Gastrocnemius medialis (tissue), 4 donors: ENCODE measurements at regions of chr3 and their contacts with region 1.

Region 1: GRCh38 chr3:46976326-46977190 is at the start of gene CCDC12:
- DNase-seq: peak; percentile 98 to 99
- ATAC-seq: peak; percentile 89 to 92
- H3K4me3 ChIP-seq: peak within 1 kb of the TSS; percentile 75 to 94 (median 88)
- H3K27ac ChIP-seq: peak within 1 kb of the TSS; percentile 93 to 98 (median 95)
- H3K4me1 ChIP-seq: peaks cover 44 to 50% of the 10 kb centered on the region in 2 donors
- H3K27me3 ChIP-seq: no peaks in the 10 kb centered on the region
- CTCF ChIP-seq: no peak
- POLR2A ChIP-seq: peak; percentile 89 to 95
- total RNA-seq, gene CCDC12: 24.6 to 32.0 (median 29.0) TPM

Region 2: DNA sequence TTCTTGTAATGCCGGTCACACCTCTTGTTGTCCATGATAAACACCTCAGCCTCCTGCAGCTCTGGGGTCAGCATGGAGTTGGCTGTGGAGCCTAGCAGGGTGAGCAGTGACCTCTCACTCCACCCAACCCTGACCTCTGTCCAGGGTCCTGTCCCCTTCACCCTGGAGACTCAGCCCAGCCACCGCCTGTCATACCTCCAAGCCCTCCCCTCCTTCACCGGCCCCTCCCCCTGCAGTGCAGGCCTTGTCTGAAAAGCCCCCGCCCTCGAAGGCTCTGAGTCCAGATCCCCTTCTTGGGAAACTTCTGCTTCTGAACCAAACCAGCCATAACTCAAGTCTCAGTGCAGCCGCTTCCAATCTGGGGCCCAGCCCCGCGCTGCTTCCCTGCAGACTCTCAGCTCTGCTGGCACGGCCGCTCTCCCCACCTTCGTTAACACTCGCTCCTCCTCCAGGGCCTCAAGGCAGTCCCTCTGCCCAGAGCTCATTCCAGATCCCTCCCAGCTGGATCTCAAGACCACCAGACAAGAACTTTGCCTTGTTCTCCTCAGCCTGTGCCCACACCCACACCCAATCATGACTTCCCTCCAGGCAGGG is 233.5 kb before region 1 on chr3:
- in situ Hi-C with region 1: no loop called
- intact Hi-C with region 1: no loop called
- DNase-seq: no peak
- ATAC-seq: no peak
- H3K4me3 ChIP-seq: no peak overlapping the region
- H3K27ac ChIP-seq: no peak overlapping the region
- H3K4me1 ChIP-seq: no peaks in the 10 kb centered on the region
- H3K27me3 ChIP-seq: no peaks in the 10 kb centered on the region
- CTCF ChIP-seq: no peak
- POLR2A ChIP-seq: no peak

Region 3: DNA sequence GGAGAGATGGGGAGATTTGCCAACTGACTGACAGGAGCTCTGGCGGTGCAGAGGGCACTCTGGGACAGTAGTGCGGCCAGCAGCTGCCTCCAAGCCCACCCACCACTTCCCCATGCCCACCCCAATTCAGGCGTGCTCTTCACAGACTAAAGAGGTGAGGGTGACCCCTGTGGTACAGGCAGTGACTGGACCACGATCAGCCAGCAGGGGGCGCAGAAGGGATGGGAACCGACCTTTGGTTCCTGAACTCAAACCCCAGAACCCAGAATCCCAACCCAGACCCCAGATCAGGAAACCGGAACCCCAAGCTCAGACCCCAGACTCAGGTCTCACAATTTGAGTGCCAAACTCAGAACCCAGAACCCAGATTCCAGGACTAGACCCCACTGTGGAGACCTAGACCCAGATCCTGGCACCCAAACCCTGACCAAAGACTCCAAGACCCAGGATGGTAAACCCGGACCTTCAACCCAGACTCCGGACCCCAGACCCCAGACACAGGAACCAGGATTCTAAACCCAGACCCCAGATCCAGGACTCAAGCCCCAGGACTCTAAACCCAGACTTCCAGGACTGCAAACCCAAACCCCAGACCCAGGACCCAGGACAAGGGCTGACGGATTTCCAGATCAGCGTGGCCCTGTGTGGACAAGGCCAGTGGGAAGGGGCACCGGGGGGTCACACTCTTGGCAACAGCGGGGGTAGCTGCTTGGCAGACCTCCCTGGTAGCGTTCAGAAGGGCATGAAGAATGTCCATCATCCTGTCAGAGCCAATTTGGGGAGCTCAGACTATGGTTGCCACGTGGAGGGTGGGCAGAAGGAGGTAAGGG is 109.6 kb before region 1 on chr3:
- in situ Hi-C with region 1: no loop called
- intact Hi-C with region 1: loop called (anchors 5 kb)
- DNase-seq: peak; percentile 41 to 68
- ATAC-seq: peak; percentile 40 to 56
- H3K4me3 ChIP-seq: peak overlapping the region in 2 of 4 donors; percentile 7 to 19
- H3K27ac ChIP-seq: peak overlapping the region; percentile 68 to 89 (median 72)
- H3K4me1 ChIP-seq: peaks cover 34 to 36% of the 10 kb centered on the region in 2 donors
- H3K27me3 ChIP-seq: no peaks in the 10 kb centered on the region
- CTCF ChIP-seq: peak; percentile 86 to 95 (median 91)
- POLR2A ChIP-seq: no peak

Region 4: DNA sequence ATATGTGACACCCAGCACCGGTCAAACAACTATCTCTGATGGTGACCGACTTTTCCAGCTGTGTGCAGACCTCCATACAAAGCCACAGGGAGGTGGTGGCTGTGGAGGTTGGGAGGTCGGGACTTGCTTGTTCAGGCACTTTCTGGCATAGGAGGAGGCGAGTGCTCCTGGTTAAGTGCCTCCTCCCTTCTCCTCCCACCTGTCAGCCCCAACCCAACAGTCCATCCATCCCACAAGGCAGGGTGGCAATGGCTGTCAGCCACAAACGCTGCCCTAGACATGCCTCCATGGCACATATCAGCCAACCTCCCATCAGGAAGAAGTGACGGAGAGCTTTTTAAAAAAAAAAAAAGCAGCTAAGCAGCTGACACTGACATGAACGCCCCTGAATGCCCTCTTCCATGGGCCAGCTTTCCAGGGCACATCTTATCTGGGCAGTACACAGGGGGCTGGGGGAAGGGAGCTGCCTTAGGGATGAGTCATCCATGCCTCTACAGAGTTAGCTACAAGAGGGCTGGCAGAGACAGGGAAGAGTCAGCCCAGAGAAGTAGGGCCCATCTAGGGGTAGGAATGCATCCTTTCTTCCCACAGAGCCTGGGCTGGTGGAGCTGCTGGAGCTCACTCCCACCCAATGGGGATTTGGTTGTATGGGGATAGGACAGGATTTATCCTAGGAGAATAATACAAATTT is 41.2 kb before region 1 on chr3:
- in situ Hi-C with region 1: no loop called
- intact Hi-C with region 1: loop called (anchors 2 kb)
- DNase-seq: peak; percentile 94 to 99
- ATAC-seq: peak; percentile 92 to 94
- H3K4me3 ChIP-seq: no peak overlapping the region
- H3K27ac ChIP-seq: peak overlapping the region; percentile 90 to 96 (median 92)
- H3K4me1 ChIP-seq: peaks cover 89 to 90% of the 10 kb centered on the region in 2 donors
- H3K27me3 ChIP-seq: no peaks in the 10 kb centered on the region
- CTCF ChIP-seq: peak; percentile 63 to 88 (median 69)
- POLR2A ChIP-seq: peak; percentile 14 to 41

Region 5: DNA sequence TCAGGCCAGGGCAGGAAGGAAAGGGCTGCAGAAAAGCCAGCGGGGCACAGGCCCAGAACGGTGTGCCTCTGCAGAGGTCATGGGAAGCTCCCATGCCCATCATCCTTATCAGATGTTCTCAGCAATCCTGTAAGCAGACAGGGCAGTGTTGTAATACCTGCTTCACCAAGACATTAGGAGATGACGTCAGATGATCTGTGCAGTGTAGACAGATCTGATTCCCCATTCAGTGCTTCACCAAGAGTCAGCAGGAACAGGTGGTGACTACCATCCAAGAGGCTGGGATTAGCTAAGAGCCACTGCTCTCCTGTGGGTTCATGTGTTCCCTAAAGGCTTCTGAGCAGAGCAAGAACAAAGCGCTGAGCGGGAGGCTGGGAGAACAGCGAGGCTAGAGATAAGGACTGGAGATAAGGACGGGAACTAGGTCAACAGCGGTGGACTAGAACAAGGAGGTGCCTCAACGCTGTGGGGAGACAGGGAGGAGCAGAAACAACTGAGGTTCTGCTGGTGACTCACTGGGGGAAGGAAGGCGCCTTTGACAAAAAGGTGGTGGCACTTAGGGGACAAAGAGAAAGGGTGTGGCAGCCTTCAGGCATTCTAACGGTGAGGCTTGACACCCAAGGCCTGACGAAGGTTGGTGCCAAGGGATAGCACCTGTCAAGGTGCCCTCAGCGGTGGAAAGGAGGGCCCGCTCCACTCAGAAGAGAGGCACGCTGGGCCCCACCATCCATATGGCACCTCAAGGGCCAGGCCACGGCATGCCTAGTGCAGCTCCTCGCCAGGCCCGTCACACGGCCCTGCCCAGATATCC is 28.4 kb before region 1 on chr3:
- in situ Hi-C with region 1: no loop called
- intact Hi-C with region 1: loop called (anchors 2 kb)
- DNase-seq: peak; percentile 73 to 91
- ATAC-seq: peak; percentile 95 to 96
- H3K4me3 ChIP-seq: no peak overlapping the region
- H3K27ac ChIP-seq: peak overlapping the region; percentile 86 to 91 (median 88)
- H3K4me1 ChIP-seq: peaks cover 72 to 87% of the 10 kb centered on the region in 2 donors
- H3K27me3 ChIP-seq: no peaks in the 10 kb centered on the region
- CTCF ChIP-seq: no peak
- POLR2A ChIP-seq: peak; percentile 26 to 62

Region 6: DNA sequence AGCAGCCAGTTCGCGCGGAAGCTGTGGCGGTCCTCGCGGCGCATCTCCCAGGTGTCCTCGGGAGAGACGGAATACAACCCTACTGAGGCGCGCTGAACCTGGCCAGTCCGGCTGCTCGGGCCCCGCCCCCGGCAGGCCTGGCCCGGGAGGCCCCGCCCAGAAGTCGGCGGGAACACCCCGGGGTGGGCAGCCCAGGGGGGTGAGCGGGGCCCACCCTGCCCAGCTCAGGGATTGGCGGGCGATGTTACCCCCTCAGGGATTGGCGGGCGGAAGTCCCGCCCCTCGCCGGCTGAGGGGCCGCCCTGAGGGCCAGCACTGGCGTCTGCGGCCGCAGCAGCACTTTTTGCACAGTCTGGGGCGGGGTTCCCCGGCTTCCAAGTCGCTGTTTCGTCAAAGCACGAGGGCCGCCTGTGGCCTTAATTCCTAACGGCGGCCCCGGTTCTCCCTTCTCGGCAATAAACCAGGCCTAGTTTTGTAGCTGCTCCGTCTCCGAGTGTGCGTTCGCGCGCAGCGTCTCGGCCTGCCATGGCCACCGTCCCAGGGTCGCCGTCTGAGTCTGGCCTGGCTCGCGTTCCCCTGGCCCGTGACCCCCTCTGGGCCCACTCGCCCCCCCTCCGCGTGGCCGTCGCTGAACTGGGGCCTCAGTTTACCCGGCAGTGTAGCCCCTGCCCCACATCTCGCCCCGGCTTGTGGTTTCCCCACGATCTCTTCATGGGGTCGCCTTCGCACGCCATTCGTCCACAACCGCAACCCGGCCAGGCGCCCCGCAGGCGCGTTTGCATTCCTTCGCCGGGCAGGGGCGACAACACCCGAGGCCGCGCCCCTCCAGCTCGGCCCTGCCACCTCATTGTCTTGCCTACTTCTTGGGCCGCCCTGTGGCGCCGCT is 32.9 kb after region 1 on chr3:
- in situ Hi-C with region 1: no loop called
- intact Hi-C with region 1: loop called (anchors 2 kb)
- DNase-seq: peak; percentile 74 to 90
- ATAC-seq: peak; percentile 75 to 79
- H3K4me3 ChIP-seq: peak overlapping the region; percentile 55 to 71 (median 66)
- H3K27ac ChIP-seq: peak overlapping the region; percentile 85 to 88 (median 86)
- H3K4me1 ChIP-seq: peaks cover 4 to 18% of the 10 kb centered on the region in 2 donors
- H3K27me3 ChIP-seq: no peaks in the 10 kb centered on the region
- CTCF ChIP-seq: no peak
- POLR2A ChIP-seq: peak; percentile 86 to 89